Activated B cell treated with CpG ODN at 0.5 μM for 24 hours (primary cell): ENCODE measurements at regions of chr7 and their contacts with region 1.

Region 1: GRCh38 chr7:138738551-138739335 is 37.6 kb upstream of the SVOPL start:
- DNase-seq: peak; percentile 38
- ATAC-seq: no peak
- H3K4me3 Mint-ChIP-seq: no peak overlapping the region
- H3K27ac Mint-ChIP-seq: no peak overlapping the region
- H3K4me1 Mint-ChIP-seq: no peaks in the 10 kb centered on the region
- H3K27me3 Mint-ChIP-seq: peaks cover 4% of the 10 kb centered on the region
- CTCF ChIP-seq: peak; percentile 26

Region 2: DNA sequence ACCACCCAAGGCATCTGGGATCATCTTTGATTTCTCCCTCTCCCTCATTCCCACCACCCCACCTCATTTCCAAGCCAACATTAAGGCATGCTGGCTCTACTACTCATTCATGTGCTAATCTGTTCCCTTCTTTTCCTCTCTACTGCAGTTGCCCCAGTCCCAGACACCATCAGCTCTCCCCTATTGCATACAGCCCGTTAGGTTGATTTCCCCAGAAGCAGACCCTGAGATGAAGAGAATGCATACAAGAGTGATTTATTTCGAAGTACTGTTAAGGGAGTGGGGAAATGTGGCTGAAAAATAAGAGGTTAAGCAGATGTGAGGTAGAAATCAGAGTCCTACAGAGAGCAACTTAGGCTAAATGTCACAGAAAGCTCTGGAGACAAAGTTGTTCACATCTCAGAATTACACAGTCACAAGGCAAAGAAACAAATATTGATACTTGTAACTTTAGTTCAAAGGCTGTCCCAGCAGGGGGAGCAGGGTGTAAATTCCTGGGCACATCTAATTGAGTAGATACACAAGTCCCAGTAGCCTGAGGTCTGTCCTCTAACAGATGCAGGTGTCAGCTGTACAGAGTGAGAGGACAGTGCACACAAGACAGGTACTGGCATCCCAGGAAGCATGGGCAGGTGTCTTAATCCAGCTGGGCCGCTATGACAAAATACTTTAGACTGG is 641.5 kb before region 1 on chr7:
- CTCF ChIA-PET with region 1: no interaction called
- POLR2A ChIA-PET with region 1: no interaction called
- intact Hi-C with region 1: loop called (anchors 1 kb)
- DNase-seq: no peak
- ATAC-seq: no peak
- H3K4me3 Mint-ChIP-seq: no peak overlapping the region
- H3K27ac Mint-ChIP-seq: no peak overlapping the region
- H3K4me1 Mint-ChIP-seq: no peaks in the 10 kb centered on the region
- H3K27me3 Mint-ChIP-seq: no peaks in the 10 kb centered on the region
- CTCF ChIP-seq: no peak

Region 3: GRCh38 chr7:138161600-138162081 is 577.1 kb before region 1 on chr7:
- CTCF ChIA-PET with region 1: interaction called, 34 read pairs
- POLR2A ChIA-PET with region 1: no interaction called
- intact Hi-C with region 1: no loop called
- DNase-seq: no peak
- ATAC-seq: peak; percentile 99
- H3K4me3 Mint-ChIP-seq: no peak overlapping the region
- H3K27ac Mint-ChIP-seq: no peak overlapping the region
- H3K4me1 Mint-ChIP-seq: no peaks in the 10 kb centered on the region
- H3K27me3 Mint-ChIP-seq: no peaks in the 10 kb centered on the region
- CTCF ChIP-seq: no peak

Region 4: DNA sequence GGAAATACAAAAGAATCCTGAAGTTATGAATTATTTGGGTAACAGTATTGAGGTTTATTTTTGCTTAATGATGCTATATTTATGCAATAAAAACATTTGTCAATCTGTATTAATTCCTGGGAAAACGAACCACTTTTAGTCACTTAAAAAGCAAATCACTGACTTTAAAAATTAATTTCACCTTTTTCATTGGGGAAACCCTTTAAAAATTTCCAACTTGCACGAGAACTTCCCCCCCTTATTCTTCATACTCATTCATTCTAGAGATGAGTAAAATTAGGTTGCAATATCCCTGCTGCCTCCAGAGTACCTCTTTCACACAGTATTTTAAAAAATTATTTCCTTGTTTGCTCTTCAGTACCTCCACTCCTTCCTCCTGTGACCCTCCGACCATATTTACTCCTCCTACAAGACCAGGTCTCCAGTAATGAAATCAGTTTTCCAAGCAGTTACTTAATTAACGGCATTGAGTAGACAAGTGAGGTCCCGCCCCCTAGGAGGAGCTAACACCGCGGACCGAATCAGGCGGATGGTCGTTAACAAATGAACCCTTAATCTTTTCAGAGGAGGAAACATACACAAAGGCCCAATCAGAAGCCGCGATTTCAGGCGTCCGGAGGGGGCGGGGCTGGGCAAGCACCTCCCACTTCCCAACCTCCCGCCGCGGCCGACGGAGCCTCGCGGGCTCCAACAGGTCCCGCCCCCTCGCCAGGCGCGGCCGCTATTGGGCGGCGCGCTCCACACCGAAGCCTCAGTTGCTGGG is 279.1 kb before region 1 on chr7:
- CTCF ChIA-PET with region 1: no interaction called
- POLR2A ChIA-PET with region 1: no interaction called
- intact Hi-C with region 1: loop called (anchors 5 kb)
- DNase-seq: peak; percentile 96
- ATAC-seq: peak; percentile 88
- H3K4me3 Mint-ChIP-seq: peak overlapping the region; percentile 91
- H3K27ac Mint-ChIP-seq: peak overlapping the region; percentile 86
- H3K4me1 Mint-ChIP-seq: peaks cover 22% of the 10 kb centered on the region
- H3K27me3 Mint-ChIP-seq: no peaks in the 10 kb centered on the region
- CTCF ChIP-seq: no peak